Heart left ventricle (tissue), 16 donors: ENCODE measurements at regions of chr14 and their contacts with region 1.

Region 1: GRCh38 chr14:90399541-90400444 is 3.0 kb downstream of the CALM1 start:
- DNase-seq: peak; percentile 90 to 93 (median 92)
- ATAC-seq: peak; percentile 70 to 85 (median 77)
- H3K4me3 ChIP-seq: peak overlapping the region in 11 of 12 donors; percentile 68 to 100 (median 98)
- H3K27ac ChIP-seq: peak overlapping the region in 11 of 12 donors; percentile 43 to 96 (median 93)
- H3K4me1 ChIP-seq: peaks cover 20 to 62% (median 49%) of the 10 kb centered on the region in 12 donors
- H3K27me3 ChIP-seq: no peaks in the 10 kb centered on the region
- CTCF ChIP-seq: peak; percentile 97 to 100 (median 99)
- POLR2A ChIP-seq: no peak

Region 2: GRCh38 chr14:90331497-90332435 is 68.0 kb before region 1 on chr14 and contains the start of gene NRDE2:
- intact Hi-C with region 1: loop called in 4 of 10 experiments (anchors 5 kb)
- DNase-seq: peak; percentile 100
- ATAC-seq: peak; percentile 100
- H3K4me3 ChIP-seq: peak within 1 kb of the TSS; percentile 54 to 96 (median 76)
- H3K27ac ChIP-seq: peak within 1 kb of the TSS; percentile 77 to 96 (median 88)
- H3K4me1 ChIP-seq: peaks cover 0 to 20% (median 8%) of the 10 kb centered on the region in 12 donors
- H3K27me3 ChIP-seq: peaks cover 0 to 14% (median 0%) of the 10 kb centered on the region in 9 donors
- CTCF ChIP-seq: peak in 1 of 12 donors; percentile 33
- POLR2A ChIP-seq: peak in 1 of 2 donors; percentile 29
- total RNA-seq, gene NRDE2: 5.2 to 15.4 (median 10.7) TPM

Region 3: GRCh38 chr14:90513161-90514014 is 113.6 kb after region 1 on chr14:
- intact Hi-C with region 1: loop called in 5 of 10 experiments (anchors 5 to 10 kb)
- DNase-seq: peak; percentile 71 to 93 (median 86)
- ATAC-seq: peak; percentile 93 to 95 (median 93)
- H3K4me3 ChIP-seq: no peak overlapping the region
- H3K27ac ChIP-seq: peak overlapping the region; percentile 27 to 94 (median 80)
- H3K4me1 ChIP-seq: peaks cover 3 to 40% (median 27%) of the 10 kb centered on the region in 12 donors
- H3K27me3 ChIP-seq: no peaks in the 10 kb centered on the region
- CTCF ChIP-seq: peak in 1 of 12 donors; percentile 13
- POLR2A ChIP-seq: no peak

Region 4: GRCh38 chr14:90534091-90534837 is 134.5 kb after region 1 on chr14:
- intact Hi-C with region 1: loop called in 2 of 10 experiments (anchors 5 to 10 kb)
- DNase-seq: peak in 4 of 5 donors; percentile 52 to 65 (median 56)
- ATAC-seq: peak in 3 of 4 donors; percentile 27 to 56 (median 47)
- H3K4me3 ChIP-seq: no peak overlapping the region
- H3K27ac ChIP-seq: peak overlapping the region in 11 of 12 donors; percentile 24 to 90 (median 75)
- H3K4me1 ChIP-seq: peaks cover 0 to 42% (median 34%) of the 10 kb centered on the region in 12 donors
- H3K27me3 ChIP-seq: no peaks in the 10 kb centered on the region
- CTCF ChIP-seq: no peak
- POLR2A ChIP-seq: no peak

Region 5: GRCh38 chr14:90697577-90698206 is 297.9 kb after region 1 on chr14:
- intact Hi-C with region 1: loop called (anchors 1 to 5 kb)
- DNase-seq: peak; percentile 85 to 88 (median 87)
- ATAC-seq: peak; percentile 88 to 93 (median 89)
- H3K4me3 ChIP-seq: peak overlapping the region in 2 of 12 donors; percentile 4 to 14
- H3K27ac ChIP-seq: peak overlapping the region; percentile 17 to 89 (median 75)
- H3K4me1 ChIP-seq: peaks cover 4 to 50% (median 30%) of the 10 kb centered on the region in 12 donors
- H3K27me3 ChIP-seq: no peaks in the 10 kb centered on the region
- CTCF ChIP-seq: peak; percentile 91 to 98 (median 95)
- POLR2A ChIP-seq: no peak

Region 6: GRCh38 chr14:91060351-91061055 is 660.7 kb after region 1 on chr14 and contains the start of gene RPS6KA5:
- intact Hi-C with region 1: loop called in 1 of 10 experiments (anchors 5 kb)
- DNase-seq: peak; percentile 100
- ATAC-seq: peak; percentile 97 to 98 (median 98)
- H3K4me3 ChIP-seq: peak within 1 kb of the TSS; percentile 68 to 98 (median 94)
- H3K27ac ChIP-seq: peak within 1 kb of the TSS; percentile 84 to 99 (median 95)
- H3K4me1 ChIP-seq: peaks cover 0 to 32% (median 6%) of the 10 kb centered on the region in 12 donors
- H3K27me3 ChIP-seq: no peaks in the 10 kb centered on the region
- CTCF ChIP-seq: peak in 7 of 12 donors; percentile 3 to 37 (median 24)
- POLR2A ChIP-seq: peak in 1 of 2 donors; percentile 84
- total RNA-seq, gene RPS6KA5: 6.5 to 13.3 (median 8.7) TPM